B cell (primary cell): ENCODE measurements at regions of chr6 and their contacts with region 1.

Region 1: DNA sequence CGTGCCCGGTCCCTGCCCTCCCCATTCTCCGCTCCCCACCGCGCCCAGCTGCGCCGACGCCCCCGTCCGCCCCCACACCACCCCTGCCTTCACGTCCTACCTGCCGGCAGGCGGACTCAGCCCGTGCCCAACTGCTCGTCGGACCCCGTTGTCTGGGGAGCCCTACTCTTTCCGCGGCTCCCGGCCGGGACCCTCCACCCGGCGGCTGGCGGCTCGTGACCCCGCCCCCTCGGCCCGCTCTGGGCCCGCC is at the start of gene SERAC1:
- DNase-seq: no peak
- ATAC-seq: peak; percentile 52
- H3K4me3 ChIP-seq: peak within 1 kb of the TSS; percentile 78 to 94 (median 83)
- H3K4me3 Mint-ChIP-seq: peak within 1 kb of the TSS; percentile 98
- H3K27ac ChIP-seq: peak within 1 kb of the TSS; percentile 83 to 95
- H3K27ac Mint-ChIP-seq: peak within 1 kb of the TSS; percentile 99
- H3K4me1 ChIP-seq: peaks cover 9 to 12% of the 10 kb centered on the region in 2 donors
- H3K4me1 Mint-ChIP-seq: peaks cover 14% of the 10 kb centered on the region
- H3K27me3 ChIP-seq: no peaks in the 10 kb centered on the region
- H3K27me3 Mint-ChIP-seq: no peaks in the 10 kb centered on the region
- CTCF ChIP-seq: no peak
- total RNA-seq, gene SERAC1: 4.8 and 5.8 TPM in 2 replicates

Region 2: GRCh38 chr6:157981395-157982296 is 186.3 kb before region 1 on chr6 and contains the start of gene SYNJ2:
- CTCF ChIA-PET with region 1: no interaction called
- POLR2A ChIA-PET with region 1: no interaction called
- intact Hi-C with region 1: loop called (anchors 1 kb)
- DNase-seq: peak; percentile 89
- ATAC-seq: peak; percentile 89
- H3K4me3 ChIP-seq: peak within 1 kb of the TSS; percentile 50 to 87 (median 77)
- H3K4me3 Mint-ChIP-seq: peak within 1 kb of the TSS; percentile 93
- H3K27ac ChIP-seq: peak within 1 kb of the TSS in 1 of 2 donors; percentile 72
- H3K27ac Mint-ChIP-seq: peak within 1 kb of the TSS; percentile 85
- H3K4me1 ChIP-seq: peaks cover 30 to 48% of the 10 kb centered on the region in 2 donors
- H3K4me1 Mint-ChIP-seq: peaks cover 40% of the 10 kb centered on the region
- H3K27me3 ChIP-seq: no peaks in the 10 kb centered on the region
- H3K27me3 Mint-ChIP-seq: no peaks in the 10 kb centered on the region
- CTCF ChIP-seq: peak; percentile 66
- total RNA-seq, gene SYNJ2: 11.4 and 12.8 TPM in 2 replicates

Region 3: GRCh38 chr6:158231551-158232315 is 63.8 kb after region 1 on chr6:
- CTCF ChIA-PET with region 1: no interaction called
- POLR2A ChIA-PET with region 1: no interaction called
- intact Hi-C with region 1: loop called (anchors 2 kb)
- DNase-seq: peak; percentile 86
- ATAC-seq: peak; percentile 79
- H3K4me3 ChIP-seq: peak overlapping the region; percentile 39 to 91 (median 77)
- H3K4me3 Mint-ChIP-seq: peak overlapping the region; percentile 92
- H3K27ac ChIP-seq: peak overlapping the region; percentile 22 to 81
- H3K27ac Mint-ChIP-seq: peak overlapping the region; percentile 92
- H3K4me1 ChIP-seq: peaks cover 15 to 16% of the 10 kb centered on the region in 2 donors
- H3K4me1 Mint-ChIP-seq: peaks cover 35% of the 10 kb centered on the region
- H3K27me3 ChIP-seq: no peaks in the 10 kb centered on the region
- H3K27me3 Mint-ChIP-seq: no peaks in the 10 kb centered on the region
- CTCF ChIP-seq: no peak

Region 4: GRCh38 chr6:158439255-158439654 is 271.3 kb after region 1 on chr6:
- CTCF ChIA-PET with region 1: no interaction called
- POLR2A ChIA-PET with region 1: interaction called, 12 read pairs
- intact Hi-C with region 1: no loop called
- DNase-seq: peak; percentile 62
- ATAC-seq: peak; percentile 81
- H3K4me3 ChIP-seq: no peak overlapping the region
- H3K4me3 Mint-ChIP-seq: no peak overlapping the region
- H3K27ac ChIP-seq: peak overlapping the region in 1 of 2 donors; percentile 43
- H3K27ac Mint-ChIP-seq: peak overlapping the region; percentile 61
- H3K4me1 ChIP-seq: peaks cover 7 to 8% of the 10 kb centered on the region in 2 donors
- H3K4me1 Mint-ChIP-seq: peaks cover 17% of the 10 kb centered on the region
- H3K27me3 ChIP-seq: no peaks in the 10 kb centered on the region
- H3K27me3 Mint-ChIP-seq: no peaks in the 10 kb centered on the region
- CTCF ChIP-seq: no peak

Region 5: DNA sequence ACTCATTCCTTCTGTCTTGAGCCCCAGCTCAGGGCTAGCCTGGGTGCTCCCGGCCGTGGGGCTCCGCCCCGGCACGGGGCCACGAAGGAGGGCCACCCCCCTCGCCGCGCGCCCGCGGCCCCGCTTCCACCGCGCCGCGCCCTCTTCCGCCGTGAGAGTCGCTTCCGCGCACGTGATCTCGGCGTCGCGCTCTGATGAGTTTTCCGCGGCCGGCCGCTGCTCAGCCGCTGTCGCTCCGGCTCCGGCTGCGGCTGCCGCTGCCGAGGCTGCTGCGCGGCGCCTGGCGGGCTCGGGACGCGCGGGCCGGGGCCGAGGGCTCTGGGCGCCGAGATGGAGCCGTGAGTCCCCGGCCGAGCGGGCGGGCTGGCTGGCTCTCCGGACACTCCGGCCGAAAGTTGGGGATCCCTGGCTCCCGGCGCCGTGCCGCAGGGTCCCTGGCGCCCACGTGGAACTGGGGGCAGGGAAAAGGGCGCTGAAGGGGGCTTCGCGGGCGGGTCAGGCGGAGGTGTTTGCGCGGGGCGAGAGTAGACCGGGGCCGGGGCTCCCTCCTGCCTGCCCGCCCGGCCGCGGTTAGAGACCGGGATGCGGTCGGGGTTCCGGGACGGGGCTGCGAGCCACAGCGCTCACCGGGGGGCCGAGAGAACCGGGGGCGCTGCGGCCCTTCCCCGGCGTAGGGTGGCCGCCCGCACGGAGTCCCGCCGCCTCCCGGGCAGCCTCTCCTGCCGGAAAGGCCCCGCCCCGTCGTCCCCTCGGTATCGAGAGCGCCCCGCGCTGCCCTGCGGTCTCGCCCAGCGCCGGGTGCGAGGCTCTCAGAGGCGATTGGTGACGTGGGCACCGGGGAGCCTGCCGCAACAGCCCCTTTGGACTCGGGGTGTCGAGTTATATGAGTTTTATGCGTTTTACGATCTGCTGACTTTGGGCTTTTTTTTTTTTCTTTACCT is 392.2 kb after region 1 on chr6 and contains the start of gene TMEM181:
- CTCF ChIA-PET with region 1: no interaction called
- POLR2A ChIA-PET with region 1: no interaction called
- intact Hi-C with region 1: loop called (anchors 5 kb)
- DNase-seq: peak; percentile 92
- ATAC-seq: peak; percentile 89
- H3K4me3 ChIP-seq: peak within 1 kb of the TSS; percentile 54 to 83 (median 75)
- H3K4me3 Mint-ChIP-seq: peak within 1 kb of the TSS; percentile 84
- H3K27ac ChIP-seq: peak within 1 kb of the TSS; percentile 62 to 76
- H3K27ac Mint-ChIP-seq: peak within 1 kb of the TSS; percentile 82
- H3K4me1 ChIP-seq: peaks cover 15 to 21% of the 10 kb centered on the region in 2 donors
- H3K4me1 Mint-ChIP-seq: peaks cover 28% of the 10 kb centered on the region
- H3K27me3 ChIP-seq: no peaks in the 10 kb centered on the region
- H3K27me3 Mint-ChIP-seq: no peaks in the 10 kb centered on the region
- CTCF ChIP-seq: no peak
- total RNA-seq, gene TMEM181: 9.3 and 9.6 TPM in 2 replicates